Activated CD4-positive, alpha-beta T cell treated with anti-CD3 and anti-CD28 coated beads for 36 hours (primary cell): ENCODE measurements at regions of chr2 and their contacts with region 1.

Region 1: GRCh38 chr2:43226558-43226954 is at the start of gene ZFP36L2:
- DNase-seq: peak; percentile 98
- ATAC-seq: peak; percentile 75
- H3K4me3 Mint-ChIP-seq: peak within 1 kb of the TSS; percentile 83
- H3K27ac Mint-ChIP-seq: peak within 1 kb of the TSS; percentile 91
- H3K4me1 Mint-ChIP-seq: peaks cover 37% of the 10 kb centered on the region
- H3K27me3 Mint-ChIP-seq: no peaks in the 10 kb centered on the region
- total RNA-seq, gene ZFP36L2: 74.4 to 77.7 TPM

Region 2: GRCh38 chr2:42859006-42859552 is 367.5 kb before region 1 on chr2:
- CTCF ChIA-PET with region 1: interaction called, 17 read pairs
- POLR2A ChIA-PET with region 1: no interaction called
- intact Hi-C with region 1: loop called (anchors 1 to 2 kb)
- DNase-seq: peak; percentile 86
- ATAC-seq: peak; percentile 69
- H3K4me3 Mint-ChIP-seq: no peak overlapping the region
- H3K27ac Mint-ChIP-seq: no peak overlapping the region
- H3K4me1 Mint-ChIP-seq: peaks cover 5% of the 10 kb centered on the region
- H3K27me3 Mint-ChIP-seq: no peaks in the 10 kb centered on the region

Region 3: DNA sequence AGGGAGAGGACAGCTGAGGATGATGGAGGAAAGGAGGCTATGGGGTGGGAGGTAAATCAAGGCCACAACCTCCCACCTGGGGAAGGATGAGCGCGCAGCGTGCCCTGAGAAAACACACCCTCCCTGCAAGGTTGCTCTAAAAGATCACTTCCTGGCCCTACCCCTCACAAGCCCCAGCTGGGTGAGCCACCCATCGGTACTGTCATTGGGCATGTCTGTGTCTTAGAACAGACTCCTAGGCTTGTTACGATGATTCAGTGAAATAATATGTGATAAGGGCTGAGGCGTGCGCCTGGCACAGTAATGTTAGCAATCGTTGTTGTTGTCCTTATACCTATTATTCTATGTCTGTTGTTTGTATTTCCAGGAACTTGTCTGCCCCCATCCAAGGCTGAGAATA is 175.2 kb before region 1 on chr2:
- CTCF ChIA-PET with region 1: interaction called, 12 read pairs
- POLR2A ChIA-PET with region 1: no interaction called
- intact Hi-C with region 1: loop called in 1 of 2 experiments (anchors 5 kb)
- DNase-seq: peak; percentile 65
- ATAC-seq: peak; percentile 88
- H3K4me3 Mint-ChIP-seq: no peak overlapping the region
- H3K27ac Mint-ChIP-seq: no peak overlapping the region
- H3K4me1 Mint-ChIP-seq: peaks cover 37% of the 10 kb centered on the region
- H3K27me3 Mint-ChIP-seq: peaks cover 2% of the 10 kb centered on the region

Region 4: GRCh38 chr2:43158259-43158880 is 68.2 kb before region 1 on chr2:
- CTCF ChIA-PET with region 1: interaction called, 6 read pairs
- POLR2A ChIA-PET with region 1: interaction called, 3 read pairs
- intact Hi-C with region 1: loop called in 1 of 2 experiments (anchors 1 kb)
- DNase-seq: peak; percentile 88
- ATAC-seq: peak; percentile 70
- H3K4me3 Mint-ChIP-seq: peak overlapping the region; percentile 63
- H3K27ac Mint-ChIP-seq: peak overlapping the region; percentile 96
- H3K4me1 Mint-ChIP-seq: peaks cover 60% of the 10 kb centered on the region
- H3K27me3 Mint-ChIP-seq: no peaks in the 10 kb centered on the region

Region 5: DNA sequence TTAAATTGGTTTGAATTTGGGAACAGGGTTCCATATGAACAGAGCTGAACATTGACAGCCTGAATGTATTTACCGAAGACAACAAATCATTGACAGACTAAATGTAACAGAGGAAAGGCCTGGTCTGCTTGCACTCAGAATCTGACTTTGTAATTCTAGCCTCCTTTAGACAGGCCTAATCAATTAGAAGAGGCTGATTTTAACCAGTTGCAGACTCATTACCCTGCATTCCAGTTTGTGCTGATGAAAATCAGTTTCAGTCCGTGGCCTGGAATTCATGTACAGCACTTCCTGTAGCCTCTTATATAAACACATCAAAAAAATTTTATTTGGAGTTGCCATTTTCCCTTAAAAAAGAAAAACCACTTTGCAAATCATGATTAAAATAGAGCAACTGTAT is 93.0 kb after region 1 on chr2:
- CTCF ChIA-PET with region 1: interaction called, 10 read pairs
- POLR2A ChIA-PET with region 1: no interaction called
- intact Hi-C with region 1: no loop called
- DNase-seq: no peak
- ATAC-seq: no peak
- H3K4me3 Mint-ChIP-seq: no peak overlapping the region
- H3K27ac Mint-ChIP-seq: no peak overlapping the region
- H3K4me1 Mint-ChIP-seq: peaks cover 7% of the 10 kb centered on the region
- H3K27me3 Mint-ChIP-seq: no peaks in the 10 kb centered on the region

Region 6: DNA sequence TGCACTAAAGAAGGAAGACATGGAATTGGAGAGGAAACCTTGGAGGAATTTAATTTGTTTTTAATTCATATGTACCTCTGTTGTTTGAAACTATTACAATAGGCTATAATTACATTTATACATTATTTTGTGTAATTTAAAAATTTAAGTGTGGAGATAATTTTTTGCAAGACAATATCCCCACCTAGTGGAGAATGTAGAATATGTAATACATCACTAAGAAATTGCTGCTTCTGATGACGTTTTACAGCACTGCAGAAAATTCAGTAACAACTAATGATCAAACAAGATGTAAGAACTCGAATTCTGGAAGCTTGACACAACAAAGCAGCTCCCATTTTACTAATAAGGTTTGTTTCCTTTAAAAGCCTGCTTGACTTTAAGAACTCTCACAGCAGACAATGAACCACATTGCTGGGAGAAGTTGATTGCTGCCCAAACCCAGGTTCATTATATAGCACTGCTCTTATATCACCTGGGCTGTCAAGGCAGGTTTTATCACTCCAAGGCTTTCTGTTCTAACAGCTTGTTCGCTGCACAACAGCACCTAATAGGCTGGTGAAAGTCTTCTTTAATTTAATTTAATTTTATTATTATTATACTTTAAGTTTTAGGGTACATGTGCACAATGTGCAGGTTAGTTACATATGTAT is 315.9 kb after region 1 on chr2:
- CTCF ChIA-PET with region 1: interaction called, 5 read pairs
- POLR2A ChIA-PET with region 1: interaction called, 3 read pairs
- intact Hi-C with region 1: loop called (anchors 1 to 5 kb)
- DNase-seq: no peak
- ATAC-seq: peak; percentile 60
- H3K4me3 Mint-ChIP-seq: no peak overlapping the region
- H3K27ac Mint-ChIP-seq: no peak overlapping the region
- H3K4me1 Mint-ChIP-seq: peaks cover 15% of the 10 kb centered on the region
- H3K27me3 Mint-ChIP-seq: no peaks in the 10 kb centered on the region